HCT116 (cell line): ENCODE measurements at regions of chrX and their contacts with region 1.

Region 1: GRCh38 chrX:29376584-29376983 is 789.3 kb downstream of the IL1RAPL1 start:
- DNase-seq: no peak
- ATAC-seq: no peak
- H3K4me3 ChIP-seq: no peak overlapping the region
- H3K27ac ChIP-seq: no peak overlapping the region
- H3K4me1 ChIP-seq: no peaks in the 10 kb centered on the region
- H3K27me3 ChIP-seq: no peaks in the 10 kb centered on the region
- CTCF ChIP-seq: no peak
- POLR2A ChIP-seq: no peak
- RAD21 ChIP-seq: no peak

Region 2: DNA sequence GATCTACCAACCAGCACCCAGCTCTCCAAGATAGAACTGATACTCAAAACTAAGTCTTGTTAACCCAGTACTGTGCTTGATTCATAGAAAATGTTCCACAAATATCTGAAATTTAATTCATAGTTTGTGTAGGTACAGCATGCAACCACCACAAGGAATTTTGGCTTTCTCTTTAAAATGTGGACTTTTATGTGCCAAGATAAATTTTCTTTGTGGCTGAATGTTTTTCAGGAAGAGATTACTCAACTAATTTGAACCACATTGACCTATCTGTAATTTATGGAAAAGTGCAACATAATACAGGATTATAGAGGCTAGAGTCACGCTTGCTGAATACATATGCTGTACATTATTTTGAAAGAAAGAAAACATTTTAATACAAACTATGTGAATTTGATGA is 58.6 kb before region 1 on chrX:
- CTCF ChIA-PET with region 1: no interaction called
- POLR2A ChIA-PET with region 1: no interaction called
- RAD21 ChIA-PET with region 1: no interaction called
- intact Hi-C with region 1: loop called (anchors 10 kb)
- DNase-seq: no peak
- ATAC-seq: no peak
- H3K4me3 ChIP-seq: no peak overlapping the region
- H3K27ac ChIP-seq: no peak overlapping the region
- H3K4me1 ChIP-seq: no peaks in the 10 kb centered on the region
- H3K27me3 ChIP-seq: no peaks in the 10 kb centered on the region
- CTCF ChIP-seq: no peak
- POLR2A ChIP-seq: no peak
- RAD21 ChIP-seq: no peak

Region 3: DNA sequence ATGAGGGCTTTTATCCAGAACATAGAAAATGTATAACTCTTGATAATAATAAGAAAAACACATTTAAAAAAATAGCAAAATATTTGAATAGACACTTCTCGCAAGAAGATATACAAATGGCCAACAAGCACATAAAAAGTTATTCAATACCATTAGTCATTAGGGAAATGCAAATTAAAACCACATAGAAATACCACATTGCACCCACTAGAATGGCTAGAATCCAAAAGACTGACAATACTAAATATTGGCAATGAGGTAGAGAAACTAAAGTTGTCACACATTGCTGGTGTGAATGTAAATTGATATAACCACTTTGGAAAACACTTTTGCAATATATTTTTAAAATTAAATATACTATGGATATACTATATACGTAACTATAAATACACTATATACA is 84.5 kb after region 1 on chrX:
- CTCF ChIA-PET with region 1: no interaction called
- POLR2A ChIA-PET with region 1: no interaction called
- RAD21 ChIA-PET with region 1: no interaction called
- intact Hi-C with region 1: no loop called
- DNase-seq: no peak
- ATAC-seq: no peak
- H3K4me3 ChIP-seq: no peak overlapping the region
- H3K27ac ChIP-seq: no peak overlapping the region
- H3K4me1 ChIP-seq: no peaks in the 10 kb centered on the region
- H3K27me3 ChIP-seq: no peaks in the 10 kb centered on the region
- CTCF ChIP-seq: no peak
- POLR2A ChIP-seq: no peak
- RAD21 ChIP-seq: no peak